B cell (primary cell): ENCODE measurements at regions of chr11 and their contacts with region 1.

Region 1: GRCh38 chr11:9506489-9507276 is 45.9 kb downstream of the ZNF143 start:
- DNase-seq: peak; percentile 81
- ATAC-seq: peak; percentile 69
- H3K4me3 ChIP-seq: no peak overlapping the region
- H3K4me3 Mint-ChIP-seq: no peak overlapping the region
- H3K27ac ChIP-seq: no peak overlapping the region
- H3K27ac Mint-ChIP-seq: no peak overlapping the region
- H3K4me1 ChIP-seq: peaks cover 3 to 7% of the 10 kb centered on the region in 2 donors
- H3K4me1 Mint-ChIP-seq: peaks cover 9% of the 10 kb centered on the region
- H3K27me3 ChIP-seq: no peaks in the 10 kb centered on the region
- H3K27me3 Mint-ChIP-seq: no peaks in the 10 kb centered on the region
- CTCF ChIP-seq: peak; percentile 92

Region 2: GRCh38 chr11:8911029-8911826 is 595.5 kb before region 1 on chr11 and contains the start of gene AKIP1:
- CTCF ChIA-PET with region 1: interaction called, 11 read pairs
- POLR2A ChIA-PET with region 1: no interaction called
- intact Hi-C with region 1: loop called (anchors 2 kb)
- DNase-seq: peak; percentile 81
- ATAC-seq: peak; percentile 77
- H3K4me3 ChIP-seq: peak within 1 kb of the TSS; percentile 61 to 78 (median 69)
- H3K4me3 Mint-ChIP-seq: peak within 1 kb of the TSS; percentile 96
- H3K27ac ChIP-seq: peak within 1 kb of the TSS; percentile 12 to 58
- H3K27ac Mint-ChIP-seq: peak within 1 kb of the TSS; percentile 86
- H3K4me1 ChIP-seq: peaks cover 18 to 26% of the 10 kb centered on the region in 2 donors
- H3K4me1 Mint-ChIP-seq: peaks cover 46% of the 10 kb centered on the region
- H3K27me3 ChIP-seq: peaks cover 0 to 3% (median 0%) of the 10 kb centered on the region in 4 experiments
- H3K27me3 Mint-ChIP-seq: peaks cover 2% of the 10 kb centered on the region
- CTCF ChIP-seq: no peak
- total RNA-seq, gene AKIP1: 10.7 and 11.5 TPM in 2 replicates

Region 3: DNA sequence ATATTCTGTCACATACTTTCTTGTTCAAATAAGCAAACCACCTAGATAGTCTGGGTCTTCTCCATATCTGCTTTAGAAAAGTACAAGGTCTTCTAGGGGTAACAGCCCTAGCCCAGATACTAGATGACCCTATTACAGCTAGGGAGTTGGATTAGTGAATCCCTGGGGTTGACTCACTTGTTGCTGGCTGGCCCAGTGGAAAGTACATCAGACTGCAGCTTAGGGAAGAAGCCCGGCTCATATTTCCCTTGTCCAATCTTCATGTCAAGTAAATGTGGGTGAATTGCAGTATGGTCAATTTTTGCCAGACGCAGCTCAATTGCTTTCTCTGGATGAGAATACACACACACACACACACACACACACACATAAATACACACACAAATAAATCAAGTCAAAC is 336.2 kb before region 1 on chr11:
- CTCF ChIA-PET with region 1: interaction called, 89 read pairs
- POLR2A ChIA-PET with region 1: interaction called, 6 read pairs
- intact Hi-C with region 1: no loop called
- DNase-seq: no peak
- ATAC-seq: no peak
- H3K4me3 ChIP-seq: no peak overlapping the region
- H3K4me3 Mint-ChIP-seq: no peak overlapping the region
- H3K27ac ChIP-seq: no peak overlapping the region
- H3K27ac Mint-ChIP-seq: no peak overlapping the region
- H3K4me1 ChIP-seq: no peaks in the 10 kb centered on the region
- H3K4me1 Mint-ChIP-seq: no peaks in the 10 kb centered on the region
- H3K27me3 ChIP-seq: no peaks in the 10 kb centered on the region
- H3K27me3 Mint-ChIP-seq: no peaks in the 10 kb centered on the region
- CTCF ChIP-seq: no peak

Region 4: DNA sequence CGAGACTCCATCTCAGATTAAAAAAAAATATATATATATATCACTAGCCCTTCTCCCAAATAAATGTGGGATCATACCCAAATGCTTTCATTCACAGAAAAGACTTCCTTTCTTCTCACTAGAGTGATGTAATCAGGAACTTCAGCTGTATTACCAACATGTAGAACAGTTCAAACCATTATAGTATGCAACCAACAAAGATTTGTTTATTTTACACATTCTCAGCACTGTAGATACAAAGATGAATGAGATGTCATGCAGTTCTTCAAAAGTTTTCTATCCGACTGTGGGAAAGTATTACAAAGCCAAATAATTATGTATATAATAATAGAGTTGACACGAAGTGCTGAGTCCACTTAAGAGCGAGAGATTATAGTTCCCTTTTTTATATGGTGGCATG is 68.1 kb before region 1 on chr11:
- CTCF ChIA-PET with region 1: interaction called, 8 read pairs
- POLR2A ChIA-PET with region 1: no interaction called
- intact Hi-C with region 1: loop called (anchors 10 kb)
- DNase-seq: no peak
- ATAC-seq: no peak
- H3K4me3 ChIP-seq: no peak overlapping the region
- H3K4me3 Mint-ChIP-seq: no peak overlapping the region
- H3K27ac ChIP-seq: no peak overlapping the region
- H3K27ac Mint-ChIP-seq: no peak overlapping the region
- H3K4me1 ChIP-seq: no peaks in the 10 kb centered on the region
- H3K4me1 Mint-ChIP-seq: no peaks in the 10 kb centered on the region
- H3K27me3 ChIP-seq: no peaks in the 10 kb centered on the region
- H3K27me3 Mint-ChIP-seq: no peaks in the 10 kb centered on the region
- CTCF ChIP-seq: no peak

Region 5: DNA sequence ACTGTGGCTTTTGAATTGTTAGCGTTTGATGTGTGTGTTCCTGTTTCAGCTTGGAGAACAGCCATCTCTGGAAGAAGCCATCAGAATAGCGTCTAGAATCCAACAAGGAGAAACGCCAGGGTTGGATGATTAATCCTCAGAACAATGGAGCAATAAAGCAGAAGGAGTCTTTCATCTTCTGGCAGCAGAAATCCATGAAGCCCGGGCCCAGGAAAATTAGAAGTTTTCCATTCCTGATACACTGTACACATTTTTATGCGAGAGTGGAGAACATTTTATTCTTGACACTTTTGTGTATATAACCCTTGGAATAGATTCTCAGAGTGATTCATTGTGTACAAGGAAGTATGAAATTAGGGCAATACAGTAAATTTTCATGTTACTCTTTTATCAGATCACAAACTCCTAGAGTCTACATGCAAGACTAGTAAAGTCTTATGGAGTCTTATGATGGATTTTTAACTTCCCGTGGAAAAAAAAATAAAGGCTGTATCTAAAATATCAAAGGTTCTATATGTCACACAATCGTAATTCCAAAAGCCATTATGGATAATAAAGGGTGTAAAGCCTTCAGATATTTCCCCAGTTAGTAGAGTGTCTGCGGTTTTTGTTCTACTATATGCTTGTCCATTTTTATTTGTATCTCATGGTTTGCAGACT is 20.9 kb after region 1 on chr11:
- CTCF ChIA-PET with region 1: interaction called, 14 read pairs
- POLR2A ChIA-PET with region 1: no interaction called
- intact Hi-C with region 1: no loop called
- DNase-seq: no peak
- ATAC-seq: no peak
- H3K4me3 ChIP-seq: no peak overlapping the region
- H3K4me3 Mint-ChIP-seq: no peak overlapping the region
- H3K27ac ChIP-seq: no peak overlapping the region
- H3K27ac Mint-ChIP-seq: no peak overlapping the region
- H3K4me1 ChIP-seq: no peaks in the 10 kb centered on the region
- H3K4me1 Mint-ChIP-seq: no peaks in the 10 kb centered on the region
- H3K27me3 ChIP-seq: no peaks in the 10 kb centered on the region
- H3K27me3 Mint-ChIP-seq: no peaks in the 10 kb centered on the region
- CTCF ChIP-seq: no peak

Region 6: DNA sequence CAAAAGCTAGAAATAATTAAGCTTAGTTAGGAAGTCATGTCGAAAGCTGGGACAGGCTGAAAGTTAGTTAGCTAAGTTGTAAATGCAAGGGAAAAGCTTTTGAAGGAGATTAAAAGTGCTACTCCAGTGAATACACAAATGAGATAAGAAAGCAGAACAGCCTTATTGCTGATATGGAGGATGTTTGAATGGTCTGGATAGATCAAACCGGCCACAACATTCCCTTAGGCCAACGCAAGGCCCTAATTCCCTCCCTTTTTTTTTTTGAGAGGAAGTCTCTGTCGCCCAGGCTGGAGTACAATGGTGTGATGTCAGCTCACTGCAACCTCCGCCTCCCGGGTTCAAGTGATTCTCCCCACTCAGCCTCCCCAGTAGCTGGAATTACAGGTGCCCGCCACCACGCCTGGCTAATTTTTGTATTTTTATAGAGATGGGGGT is 43.5 kb after region 1 on chr11:
- CTCF ChIA-PET with region 1: no interaction called
- POLR2A ChIA-PET with region 1: no interaction called
- intact Hi-C with region 1: no loop called
- DNase-seq: no peak
- ATAC-seq: no peak
- H3K4me3 ChIP-seq: no peak overlapping the region
- H3K4me3 Mint-ChIP-seq: no peak overlapping the region
- H3K27ac ChIP-seq: no peak overlapping the region
- H3K27ac Mint-ChIP-seq: peak overlapping the region; percentile 51
- H3K4me1 ChIP-seq: no peaks in the 10 kb centered on the region
- H3K4me1 Mint-ChIP-seq: peaks cover 8% of the 10 kb centered on the region
- H3K27me3 ChIP-seq: no peaks in the 10 kb centered on the region
- H3K27me3 Mint-ChIP-seq: no peaks in the 10 kb centered on the region
- CTCF ChIP-seq: no peak

Region 7: DNA sequence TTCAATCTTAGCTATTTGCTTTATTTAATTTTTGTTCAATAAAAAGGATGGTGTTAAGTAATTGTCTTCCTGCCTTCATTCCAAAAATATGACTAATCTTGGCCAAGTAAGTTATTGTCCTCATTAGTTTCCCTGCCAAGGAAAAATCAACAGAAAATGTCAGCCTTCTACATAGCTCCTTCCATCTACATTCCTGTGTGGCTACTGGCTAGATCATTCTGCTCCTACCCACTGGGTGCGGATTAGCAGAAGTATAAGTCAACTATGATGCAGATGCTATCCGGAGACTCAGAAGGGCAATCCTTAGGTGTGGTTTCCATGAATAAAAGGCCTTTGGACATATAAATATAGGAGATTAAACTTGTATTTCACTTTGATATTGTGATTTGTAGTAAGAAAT is 633.0 kb after region 1 on chr11:
- CTCF ChIA-PET with region 1: no interaction called
- POLR2A ChIA-PET with region 1: no interaction called
- intact Hi-C with region 1: no loop called
- DNase-seq: no peak
- ATAC-seq: no peak
- H3K4me3 ChIP-seq: no peak overlapping the region
- H3K4me3 Mint-ChIP-seq: no peak overlapping the region
- H3K27ac ChIP-seq: no peak overlapping the region
- H3K27ac Mint-ChIP-seq: no peak overlapping the region
- H3K4me1 ChIP-seq: no peaks in the 10 kb centered on the region
- H3K4me1 Mint-ChIP-seq: no peaks in the 10 kb centered on the region
- H3K27me3 ChIP-seq: no peaks in the 10 kb centered on the region
- H3K27me3 Mint-ChIP-seq: no peaks in the 10 kb centered on the region
- CTCF ChIP-seq: no peak